ENCODE measurements at regions of chr2 and their contacts with region 1.

Region 1: DNA sequence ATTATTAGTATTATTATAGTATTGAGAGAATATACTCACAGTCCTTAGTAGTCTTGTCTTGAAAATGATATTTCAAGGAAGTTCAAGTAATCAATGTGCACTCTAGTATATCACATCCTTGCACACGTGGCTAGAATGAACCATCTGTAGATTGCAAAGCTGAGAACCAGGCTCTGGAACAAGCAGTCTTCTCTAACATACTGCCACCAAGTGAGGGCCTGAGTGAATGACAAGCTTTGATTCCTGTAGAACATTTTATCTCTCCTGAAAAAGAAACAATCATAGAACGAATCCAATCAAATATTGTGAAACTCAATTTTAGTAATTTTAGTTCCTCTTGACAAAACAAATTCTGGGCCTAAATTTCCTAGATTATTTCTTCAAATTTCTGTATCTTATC is 55.3 kb upstream of the SULT1C3 start:
- H3K4me3 ChIP-seq: no peak overlapping the region
- H3K27ac ChIP-seq: no peak overlapping the region
- H3K4me1 ChIP-seq: no peaks in the 10 kb centered on the region
- CTCF ChIP-seq: no peak

Region 2: DNA sequence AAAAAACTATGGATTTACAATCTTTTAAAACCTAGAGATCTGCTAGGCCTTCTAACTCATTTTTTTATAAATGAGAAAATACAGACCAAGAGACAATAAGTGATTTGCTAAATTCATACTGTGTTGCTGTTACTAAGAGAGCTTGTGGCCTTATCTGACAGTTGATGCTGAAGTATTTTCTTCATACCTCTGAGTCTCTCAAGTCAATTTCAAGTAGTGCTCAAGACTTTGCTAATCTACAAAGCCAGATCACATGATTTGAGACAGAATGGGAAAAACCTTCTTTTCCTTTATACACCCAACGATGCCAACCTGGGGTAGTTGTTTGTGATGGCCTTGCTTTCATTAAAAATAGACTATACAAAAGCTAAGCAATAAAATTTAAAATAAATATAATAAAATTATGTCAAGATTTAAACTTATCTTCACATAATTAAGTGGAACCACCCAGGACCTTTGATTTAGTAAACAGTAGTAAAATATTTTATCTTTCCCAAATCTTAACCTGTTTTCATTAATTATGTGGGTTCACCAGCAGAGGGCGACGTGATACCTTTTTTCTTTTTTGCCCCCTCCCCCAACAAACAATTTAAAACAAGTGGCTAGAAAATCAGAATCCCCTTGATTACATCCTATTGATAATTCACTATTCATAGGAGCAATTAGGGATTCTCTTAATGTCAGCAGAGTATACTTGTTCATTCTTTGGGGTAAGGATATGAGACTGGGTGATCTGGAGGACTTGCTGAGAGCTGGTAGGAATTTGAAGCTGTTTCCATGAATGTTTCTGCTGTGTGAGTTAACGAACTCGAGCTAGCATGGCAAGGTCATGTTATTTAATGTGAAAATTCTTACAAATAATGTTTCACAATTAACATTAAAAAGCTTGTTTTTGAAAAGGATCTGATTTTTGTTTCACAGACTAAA is 247.7 kb before region 1 on chr2:
- CTCF ChIA-PET with region 1: interaction called, 34 read pairs
- POLR2A ChIA-PET with region 1: no interaction called
- H3K4me3 ChIP-seq: no peak overlapping the region
- H3K27ac ChIP-seq: no peak overlapping the region
- H3K4me1 ChIP-seq: no peaks in the 10 kb centered on the region
- CTCF ChIP-seq: no peak

Region 3: GRCh38 chr2:108082978-108083377 is 101.4 kb before region 1 on chr2:
- CTCF ChIA-PET with region 1: no interaction called
- POLR2A ChIA-PET with region 1: no interaction called
- H3K4me3 ChIP-seq: no peak overlapping the region
- H3K27ac ChIP-seq: no peak overlapping the region
- H3K4me1 ChIP-seq: no peaks in the 10 kb centered on the region
- CTCF ChIP-seq: no peak

Region 4: DNA sequence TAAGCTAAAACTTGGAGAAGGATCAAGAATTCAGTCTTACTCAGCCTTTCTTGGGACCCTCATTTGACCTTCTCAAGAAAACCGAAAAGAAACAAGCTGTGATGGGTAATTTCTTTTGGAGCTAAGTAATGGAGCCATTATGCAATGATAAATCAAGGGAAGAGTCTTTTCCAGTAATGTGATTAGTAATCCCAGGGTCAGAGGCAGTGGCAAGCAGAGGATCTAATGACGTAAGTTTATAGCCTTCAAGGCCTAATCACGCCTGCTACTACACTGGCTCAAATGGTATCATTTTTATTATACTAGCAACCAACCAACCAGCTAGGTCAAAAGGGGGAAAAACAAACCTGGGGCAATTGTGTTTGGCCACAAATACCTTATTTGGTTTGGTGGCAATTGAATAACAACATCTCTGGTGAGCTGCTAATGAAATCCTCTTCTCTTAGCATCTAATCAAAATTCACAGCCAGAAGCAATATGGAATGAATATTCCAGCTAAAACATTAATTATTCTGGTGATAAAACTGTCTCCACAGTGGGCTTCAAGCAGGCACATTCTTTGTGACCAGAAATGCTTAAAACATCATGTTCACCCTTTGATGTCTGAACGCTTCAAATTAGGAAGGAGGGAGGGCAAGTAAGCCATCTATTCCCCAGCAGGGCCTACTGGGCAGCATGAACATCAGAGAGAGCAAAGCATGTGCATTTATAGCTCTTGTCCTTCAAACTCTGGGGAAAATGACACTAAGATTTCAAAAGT is 59.5 kb before region 1 on chr2:
- CTCF ChIA-PET with region 1: no interaction called
- POLR2A ChIA-PET with region 1: no interaction called
- H3K4me3 ChIP-seq: no peak overlapping the region
- H3K27ac ChIP-seq: no peak overlapping the region
- H3K4me1 ChIP-seq: no peaks in the 10 kb centered on the region
- CTCF ChIP-seq: no peak

Region 5: GRCh38 chr2:108388045-108388444 is 203.6 kb after region 1 on chr2:
- CTCF ChIA-PET with region 1: no interaction called
- POLR2A ChIA-PET with region 1: no interaction called
- H3K4me3 ChIP-seq: no peak overlapping the region
- H3K27ac ChIP-seq: no peak overlapping the region
- H3K4me1 ChIP-seq: no peaks in the 10 kb centered on the region
- CTCF ChIP-seq: no peak

Region 6: GRCh38 chr2:108870069-108870644 is 685.7 kb after region 1 on chr2:
- CTCF ChIA-PET with region 1: no interaction called
- POLR2A ChIA-PET with region 1: no interaction called
- H3K4me3 ChIP-seq: no peak overlapping the region
- H3K27ac ChIP-seq: no peak overlapping the region
- H3K4me1 ChIP-seq: no peaks in the 10 kb centered on the region
- CTCF ChIP-seq: no peak